H1 (cell line): ENCODE measurements at regions of chr9 and their contacts with region 1.

Region 1: DNA sequence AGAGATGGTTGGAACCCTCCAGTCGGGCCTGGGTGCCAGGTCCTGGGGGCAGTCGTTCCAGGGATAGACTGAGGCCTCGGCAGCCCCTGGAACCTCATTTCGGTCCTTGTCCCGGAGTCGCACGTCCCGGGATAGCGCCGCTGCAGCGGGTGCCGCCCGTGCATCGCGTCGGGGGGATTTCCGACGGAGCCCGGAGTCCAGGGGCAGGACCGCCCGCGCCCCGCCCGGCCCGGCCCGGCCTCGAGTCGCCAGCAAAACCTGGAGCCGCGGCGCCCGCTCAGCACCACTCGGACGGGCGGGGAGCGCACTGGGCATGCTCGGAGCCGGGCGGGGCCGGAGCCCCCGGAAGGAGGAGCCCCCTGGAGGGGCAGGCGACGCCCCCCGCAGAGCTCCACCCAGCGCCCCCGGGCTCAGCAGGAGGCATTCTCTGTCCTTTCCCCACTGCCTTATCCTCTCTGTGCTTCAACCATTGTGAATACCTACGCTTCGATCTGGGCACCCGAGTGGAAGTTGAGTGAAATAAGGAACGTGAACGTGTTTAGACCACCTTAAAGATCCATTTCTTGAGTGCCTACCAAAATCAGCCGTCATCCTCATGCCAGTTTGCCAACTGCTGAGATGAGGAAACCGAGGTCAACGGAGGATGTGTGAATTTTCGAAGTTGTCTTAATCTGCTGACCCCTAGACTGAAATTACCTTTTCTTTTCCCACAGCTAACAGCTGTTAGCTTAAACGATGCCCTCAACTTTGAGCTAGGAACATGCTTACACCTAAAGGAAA is 1.7 kb upstream of the PTPN3 start:
- DNase-seq: peak in 1 of 2 experiments; percentile 80
- H3K4me3 ChIP-seq: peak overlapping the region; percentile 19 to 61 (median 46)
- H3K27ac ChIP-seq: no peak overlapping the region
- H3K4me1 ChIP-seq: peaks cover 2 to 5% (median 4%) of the 10 kb centered on the region in 4 experiments; a peak in 6 of 7 replicates
- H3K27me3 ChIP-seq: peaks cover 25 to 47% (median 36%) of the 10 kb centered on the region in 4 experiments
- CTCF ChIP-seq: 0 out of 4 replicates have a peak, but pooled peaks of 1 of the 3 experiments have one; percentile 1
- EP300 ChIP-seq: no peak
- POLR2A ChIP-seq: no peak
- RAD21 ChIP-seq: no peak

Region 2: GRCh38 chr9:109453210-109453842 is 46.5 kb before region 1 on chr9:
- CTCF ChIA-PET with region 1: interaction called, 13 read pairs
- POLR2A ChIA-PET with region 1: no interaction called
- DNase-seq: no peak
- H3K4me3 ChIP-seq: no peak overlapping the region
- H3K27ac ChIP-seq: no peak overlapping the region
- H3K4me1 ChIP-seq: peaks cover 0 to 6% (median 3%) of the 10 kb centered on the region in 4 experiments; a peak in 4 of 7 replicates
- H3K27me3 ChIP-seq: no peaks in the 10 kb centered on the region
- CTCF ChIP-seq: no peak
- EP300 ChIP-seq: no peak
- POLR2A ChIP-seq: no peak
- RAD21 ChIP-seq: no peak

Region 3: DNA sequence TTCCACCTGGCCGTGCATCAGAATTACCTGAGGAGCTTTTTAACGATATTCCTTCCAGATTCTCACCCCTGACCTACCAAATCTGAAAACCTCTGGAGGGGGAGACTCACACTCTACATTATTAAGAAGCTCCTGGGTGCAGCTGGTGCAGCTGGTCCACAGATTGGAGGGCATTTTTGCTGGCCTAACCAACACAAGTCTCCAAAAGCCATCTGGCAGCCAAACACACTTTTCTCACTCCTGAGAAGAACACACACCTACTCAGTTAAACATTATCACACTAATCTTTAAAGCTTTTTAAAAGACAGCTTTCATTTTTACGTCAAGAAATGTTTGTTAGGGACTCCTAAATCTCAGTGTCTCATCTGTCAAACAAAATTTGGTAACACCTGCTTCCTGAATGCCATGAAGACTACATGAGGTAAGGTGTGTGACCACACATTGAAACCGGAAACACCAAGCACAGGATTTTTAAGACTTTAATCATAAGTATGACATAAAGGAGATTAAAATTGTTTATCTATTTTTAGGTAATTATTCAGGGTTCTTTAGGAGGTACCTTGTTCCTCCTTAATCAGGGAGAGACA is 12.4 kb after region 1 on chr9:
- CTCF ChIA-PET with region 1: interaction called, 13 read pairs
- POLR2A ChIA-PET with region 1: interaction called, 6 read pairs
- DNase-seq: no peak
- H3K4me3 ChIP-seq: no peak overlapping the region
- H3K27ac ChIP-seq: no peak overlapping the region
- H3K4me1 ChIP-seq: no peaks in the 10 kb centered on the region
- H3K27me3 ChIP-seq: no peaks in the 10 kb centered on the region
- CTCF ChIP-seq: no peak
- EP300 ChIP-seq: no peak
- POLR2A ChIP-seq: no peak
- RAD21 ChIP-seq: no peak

Region 4: GRCh38 chr9:109689701-109690100 is 189.9 kb after region 1 on chr9:
- CTCF ChIA-PET with region 1: no interaction called
- POLR2A ChIA-PET with region 1: no interaction called
- DNase-seq: no peak
- H3K4me3 ChIP-seq: no peak overlapping the region
- H3K27ac ChIP-seq: no peak overlapping the region
- H3K4me1 ChIP-seq: no peaks in the 10 kb centered on the region
- H3K27me3 ChIP-seq: no peaks in the 10 kb centered on the region
- CTCF ChIP-seq: no peak
- EP300 ChIP-seq: no peak
- POLR2A ChIP-seq: no peak
- RAD21 ChIP-seq: no peak